HAP-1 (cell line): ENCODE measurements at regions of chrX and their contacts with region 1.

Region 1: DNA sequence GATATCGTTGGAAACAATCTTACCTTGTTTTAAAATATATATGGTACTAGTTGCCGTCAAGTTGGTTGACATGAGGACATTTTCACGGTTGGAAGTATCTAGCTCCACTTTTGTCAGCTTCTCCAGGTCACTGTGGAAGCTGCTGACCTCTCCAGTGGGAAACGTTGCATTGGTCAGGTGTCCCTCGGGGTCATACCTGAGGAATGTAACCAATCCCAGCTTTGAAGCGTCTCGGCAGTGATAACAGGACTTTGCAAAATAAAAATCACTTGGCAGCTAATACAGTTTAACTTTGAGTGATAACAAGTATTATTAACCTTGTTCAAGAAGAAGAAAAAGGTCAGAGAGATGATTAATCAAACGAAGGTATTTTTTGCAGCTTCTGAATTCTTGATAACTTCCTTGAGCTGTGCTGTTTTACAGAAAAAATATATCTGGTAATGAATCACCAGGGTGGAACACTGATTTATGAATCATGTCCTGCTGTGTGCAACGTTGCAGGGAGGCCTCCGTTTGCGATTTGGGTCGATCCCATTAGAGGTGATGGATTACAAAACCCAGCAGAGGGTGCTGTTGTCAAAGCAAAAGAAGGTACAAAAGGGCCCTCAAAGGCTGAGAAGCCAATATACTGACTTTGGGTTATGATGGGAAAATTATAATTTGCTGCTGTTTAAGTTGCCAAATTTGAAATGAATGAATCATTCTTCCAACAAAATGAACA is 60.1 kb downstream of the SH2D1A start:
- DNase-seq: peak; percentile 60 to 79
- H3K4me3 ChIP-seq: no peak overlapping the region
- H3K4me1 ChIP-seq: no peaks in the 10 kb centered on the region
- H3K27me3 ChIP-seq: no peaks in the 10 kb centered on the region

Region 2: DNA sequence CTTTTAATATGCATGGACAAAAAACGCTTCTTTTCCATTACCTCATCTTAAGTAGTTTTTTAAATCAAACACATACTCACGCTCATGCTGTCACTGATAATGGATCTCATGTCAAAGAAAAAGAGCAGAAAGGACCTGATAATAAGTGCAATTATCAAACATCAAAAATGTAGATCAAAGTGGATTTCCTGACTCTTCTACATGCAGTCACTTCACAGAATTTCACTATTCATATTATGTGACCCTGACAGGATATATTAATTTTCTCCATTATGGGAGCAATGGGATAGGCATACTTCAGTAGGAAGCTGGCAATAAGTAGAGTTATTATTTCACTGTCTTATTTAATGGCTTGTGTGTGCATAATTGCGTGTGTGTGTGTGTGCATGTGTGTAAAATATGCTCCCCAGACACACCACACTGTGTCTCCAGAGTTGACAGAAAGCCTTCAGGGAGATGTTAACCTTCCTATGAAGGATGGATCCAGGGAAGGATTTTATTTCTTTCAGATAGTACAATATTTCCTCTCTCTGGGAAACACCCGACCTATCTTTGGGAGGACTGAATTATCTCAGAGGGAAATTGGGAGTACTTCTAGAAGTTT is 385.1 kb after region 1 on chrX:
- in situ Hi-C with region 1: no loop called
- DNase-seq: no peak
- H3K4me3 ChIP-seq: no peak overlapping the region
- H3K4me1 ChIP-seq: 0 out of 2 replicates have a peak, but pooled peaks cover 5% of the 10 kb centered on the region
- H3K27me3 ChIP-seq: no peaks in the 10 kb centered on the region

Region 3: DNA sequence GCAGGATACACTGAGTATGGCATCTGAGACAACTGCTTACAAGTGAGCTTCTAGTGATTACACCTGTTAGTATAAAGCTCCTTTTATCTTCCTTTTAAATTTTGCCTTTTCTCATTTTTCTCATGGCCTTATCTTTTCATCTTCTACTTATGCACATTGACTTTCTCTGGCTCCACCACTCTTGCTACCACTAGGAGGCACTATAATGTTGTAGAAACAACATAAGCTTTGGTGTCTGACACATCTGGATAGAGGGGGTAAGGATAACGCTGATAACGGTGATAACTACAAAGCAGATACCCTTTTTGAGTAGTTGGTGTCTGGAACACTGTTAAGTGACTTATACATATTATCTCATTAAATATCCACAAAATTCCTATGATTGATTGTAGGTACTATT is 725.8 kb after region 1 on chrX:
- in situ Hi-C with region 1: loop called (anchors 10 kb)
- DNase-seq: peak in 1 of 2 experiments; percentile 64
- H3K4me3 ChIP-seq: no peak overlapping the region
- H3K4me1 ChIP-seq: no peaks in the 10 kb centered on the region
- H3K27me3 ChIP-seq: no peaks in the 10 kb centered on the region